Activated CD8-positive, alpha-beta T cell treated with anti-CD3 and anti-CD28 coated beads for 36 hours (primary cell): ENCODE measurements at regions of chr14 and their contacts with region 1.

Region 1: GRCh38 chr14:56579345-56580220 is at the start of gene TMEM260:
- DNase-seq: peak; percentile 91
- ATAC-seq: peak; percentile 97
- H3K4me3 Mint-ChIP-seq: peak within 1 kb of the TSS; percentile 88
- H3K27ac Mint-ChIP-seq: peak within 1 kb of the TSS; percentile 94
- H3K4me1 Mint-ChIP-seq: peaks cover 36% of the 10 kb centered on the region
- H3K27me3 Mint-ChIP-seq: no peaks in the 10 kb centered on the region
- CTCF ChIP-seq: peak; percentile 93
- total RNA-seq, gene TMEM260: 10.6 to 11.1 TPM

Region 2: DNA sequence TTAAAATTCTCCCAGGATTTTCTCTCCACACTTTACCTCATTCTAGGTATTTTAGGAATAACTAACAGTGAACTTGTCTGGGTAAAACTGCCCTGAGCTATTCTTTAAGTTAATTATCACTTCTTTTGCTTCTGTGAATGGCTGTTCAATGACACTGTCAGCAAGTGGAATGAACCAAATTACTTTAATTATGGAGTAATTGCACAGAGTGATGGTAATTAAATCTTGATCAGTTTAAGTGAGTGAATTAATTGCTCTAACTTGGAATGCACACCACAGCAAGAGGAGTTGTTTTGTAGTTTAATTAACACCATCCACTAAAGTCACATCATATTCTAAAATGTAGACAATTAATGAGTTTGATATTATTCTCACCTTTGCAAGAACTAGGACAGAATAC is 36.1 kb before region 1 on chr14:
- CTCF ChIA-PET with region 1: no interaction called
- POLR2A ChIA-PET with region 1: no interaction called
- intact Hi-C with region 1: no loop called
- DNase-seq: no peak
- ATAC-seq: no peak
- H3K4me3 Mint-ChIP-seq: no peak overlapping the region
- H3K27ac Mint-ChIP-seq: no peak overlapping the region
- H3K4me1 Mint-ChIP-seq: no peaks in the 10 kb centered on the region
- H3K27me3 Mint-ChIP-seq: peaks cover 3% of the 10 kb centered on the region
- CTCF ChIP-seq: no peak

Region 3: GRCh38 chr14:56590535-56590960 is 11.0 kb after region 1 on chr14:
- CTCF ChIA-PET with region 1: interaction called, 21 read pairs
- POLR2A ChIA-PET with region 1: no interaction called
- intact Hi-C with region 1: no loop called
- DNase-seq: no peak
- ATAC-seq: no peak
- H3K4me3 Mint-ChIP-seq: no peak overlapping the region
- H3K27ac Mint-ChIP-seq: no peak overlapping the region
- H3K4me1 Mint-ChIP-seq: peaks cover 5% of the 10 kb centered on the region
- H3K27me3 Mint-ChIP-seq: no peaks in the 10 kb centered on the region
- CTCF ChIP-seq: no peak